Thyroid gland (tissue), 4 donors: ENCODE measurements at regions of chr1 and their contacts with region 1.

Region 1: GRCh38 chr1:17030206-17030605 is 18.5 kb upstream of the ATP13A2 start:
- DNase-seq: no peak
- H3K4me3 ChIP-seq: no peak overlapping the region
- H3K27ac ChIP-seq: no peak overlapping the region
- H3K4me1 ChIP-seq: peaks cover 7 to 12% of the 10 kb centered on the region in 2 donors
- H3K27me3 ChIP-seq: no peaks in the 10 kb centered on the region
- CTCF ChIP-seq: no peak
- POLR2A ChIP-seq: no peak

Region 2: DNA sequence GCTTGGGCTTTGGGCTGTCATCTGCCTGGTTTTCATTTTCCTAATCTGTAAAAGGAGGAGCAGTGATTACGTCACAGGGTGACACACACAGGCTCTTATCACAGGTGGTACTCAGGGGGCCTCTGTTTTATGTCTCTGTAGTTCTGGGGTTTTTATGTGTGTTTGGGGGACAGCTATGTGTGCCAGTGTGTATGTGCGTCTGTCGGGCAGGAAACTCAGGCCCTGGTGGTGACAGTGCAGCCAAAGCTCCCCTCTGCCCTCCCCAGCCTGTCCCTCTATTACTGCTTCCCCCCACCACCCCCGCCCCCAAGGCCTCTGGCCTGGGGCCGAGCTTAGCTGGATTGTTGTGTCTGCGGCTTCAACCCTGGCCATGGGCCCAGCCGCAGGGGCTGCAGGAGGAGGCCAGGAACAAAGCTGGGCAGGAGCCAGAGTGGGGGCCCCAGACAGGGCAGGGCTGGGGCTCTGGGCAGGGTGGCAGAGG is 63.1 kb before region 1 on chr1:
- intact Hi-C with region 1: loop called (anchors 5 kb)
- DNase-seq: peak; percentile 82 to 83
- H3K4me3 ChIP-seq: no peak overlapping the region
- H3K27ac ChIP-seq: no peak overlapping the region
- H3K4me1 ChIP-seq: peaks cover 12 to 15% of the 10 kb centered on the region in 2 donors
- H3K27me3 ChIP-seq: no peaks in the 10 kb centered on the region
- CTCF ChIP-seq: no peak
- POLR2A ChIP-seq: no peak

Region 3: DNA sequence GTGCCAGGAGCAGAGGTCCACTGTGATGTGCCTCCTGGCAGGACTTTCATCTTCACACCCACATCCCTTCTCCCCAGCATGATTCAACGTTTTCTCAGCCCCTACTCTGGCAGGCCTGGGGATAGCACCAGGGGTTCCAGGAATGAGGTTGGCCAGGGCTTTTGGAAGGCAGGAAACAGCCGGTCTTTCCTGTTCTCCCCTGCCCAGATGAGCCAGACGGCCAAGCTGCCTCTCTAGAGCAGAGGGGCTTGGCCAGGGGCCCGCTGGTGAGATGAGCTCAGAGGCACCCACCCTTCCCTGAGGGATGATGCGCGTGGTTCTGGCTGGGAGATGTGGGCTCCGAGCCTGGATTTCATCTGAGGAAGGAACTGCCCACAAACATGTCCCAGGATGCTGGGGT is 45.5 kb before region 1 on chr1:
- intact Hi-C with region 1: no loop called
- DNase-seq: peak; percentile 42 to 48
- H3K4me3 ChIP-seq: no peak overlapping the region
- H3K27ac ChIP-seq: peak overlapping the region in 1 of 3 donors; percentile 17
- H3K4me1 ChIP-seq: peaks cover 2 to 10% of the 10 kb centered on the region in 2 donors
- H3K27me3 ChIP-seq: no peaks in the 10 kb centered on the region
- CTCF ChIP-seq: no peak
- POLR2A ChIP-seq: no peak